ENCODE measurements at regions of chr16 and their contacts with region 1.

Region 1: GRCh38 chr16:89167425-89167941 is 4.1 kb upstream of the CDH15 start:
- DNase-seq: peak; percentile 57 to 97 (median 86)
- ATAC-seq: peak; percentile 69
- H3K4me3 ChIP-seq: no peak overlapping the region
- H3K27ac ChIP-seq: no peak overlapping the region
- H3K4me1 ChIP-seq: peaks cover 10 to 24% of the 10 kb centered on the region in 2 donors
- H3K27me3 ChIP-seq: peaks cover 0 to 84% of the 10 kb centered on the region in 2 donors
- CTCF ChIP-seq: peak; percentile 85 to 90

Region 2: GRCh38 chr16:88743693-88744576 is 423.5 kb before region 1 on chr16:
- intact Hi-C with region 1: loop called in 1 of 2 experiments (anchors 5 kb)
- DNase-seq: peak; percentile 46 to 96 (median 78)
- ATAC-seq: peak; percentile 89
- H3K4me3 ChIP-seq: no peak overlapping the region
- H3K27ac ChIP-seq: no peak overlapping the region
- H3K4me1 ChIP-seq: peaks cover 5 to 30% of the 10 kb centered on the region in 2 donors
- H3K27me3 ChIP-seq: no peaks in the 10 kb centered on the region
- CTCF ChIP-seq: peak; percentile 87 to 95

Measured in left lung (tissue), 14 donors.